ENCODE measurements at regions of chr12 and their contacts with region 1.

Region 1: GRCh38 chr12:96578526-96579125 is 89.2 kb downstream of the CFAP54 start:
- DNase-seq: no peak
- H3K4me3 Mint-ChIP-seq: no peak overlapping the region
- H3K27ac Mint-ChIP-seq: no peak overlapping the region
- H3K4me1 Mint-ChIP-seq: peaks cover 9% of the 10 kb centered on the region
- H3K27me3 Mint-ChIP-seq: peaks cover 5% of the 10 kb centered on the region

Region 2: GRCh38 chr12:96719660-96720363 is 141.2 kb after region 1 on chr12:
- CTCF ChIA-PET with region 1: interaction called, 4 read pairs
- intact Hi-C with region 1: loop called (anchors 2 kb)
- DNase-seq: peak; percentile 52
- H3K4me3 Mint-ChIP-seq: peak overlapping the region; percentile 77
- H3K27ac Mint-ChIP-seq: peak overlapping the region; percentile 85
- H3K4me1 Mint-ChIP-seq: peaks cover 11% of the 10 kb centered on the region
- H3K27me3 Mint-ChIP-seq: no peaks in the 10 kb centered on the region

Region 3: GRCh38 chr12:97308576-97309198 is 730.1 kb after region 1 on chr12:
- CTCF ChIA-PET with region 1: interaction called, 7 read pairs
- intact Hi-C with region 1: loop called (anchors 1 kb)
- DNase-seq: no peak
- H3K4me3 Mint-ChIP-seq: no peak overlapping the region
- H3K27ac Mint-ChIP-seq: no peak overlapping the region
- H3K4me1 Mint-ChIP-seq: no peaks in the 10 kb centered on the region
- H3K27me3 Mint-ChIP-seq: peaks cover 5% of the 10 kb centered on the region

Region 4: GRCh38 chr12:97404543-97404942 is 825.9 kb after region 1 on chr12:
- CTCF ChIA-PET with region 1: no interaction called
- intact Hi-C with region 1: loop called (anchors 1 kb)
- DNase-seq: peak; percentile 39
- H3K4me3 Mint-ChIP-seq: no peak overlapping the region
- H3K27ac Mint-ChIP-seq: no peak overlapping the region
- H3K4me1 Mint-ChIP-seq: no peaks in the 10 kb centered on the region
- H3K27me3 Mint-ChIP-seq: no peaks in the 10 kb centered on the region

Region 5: DNA sequence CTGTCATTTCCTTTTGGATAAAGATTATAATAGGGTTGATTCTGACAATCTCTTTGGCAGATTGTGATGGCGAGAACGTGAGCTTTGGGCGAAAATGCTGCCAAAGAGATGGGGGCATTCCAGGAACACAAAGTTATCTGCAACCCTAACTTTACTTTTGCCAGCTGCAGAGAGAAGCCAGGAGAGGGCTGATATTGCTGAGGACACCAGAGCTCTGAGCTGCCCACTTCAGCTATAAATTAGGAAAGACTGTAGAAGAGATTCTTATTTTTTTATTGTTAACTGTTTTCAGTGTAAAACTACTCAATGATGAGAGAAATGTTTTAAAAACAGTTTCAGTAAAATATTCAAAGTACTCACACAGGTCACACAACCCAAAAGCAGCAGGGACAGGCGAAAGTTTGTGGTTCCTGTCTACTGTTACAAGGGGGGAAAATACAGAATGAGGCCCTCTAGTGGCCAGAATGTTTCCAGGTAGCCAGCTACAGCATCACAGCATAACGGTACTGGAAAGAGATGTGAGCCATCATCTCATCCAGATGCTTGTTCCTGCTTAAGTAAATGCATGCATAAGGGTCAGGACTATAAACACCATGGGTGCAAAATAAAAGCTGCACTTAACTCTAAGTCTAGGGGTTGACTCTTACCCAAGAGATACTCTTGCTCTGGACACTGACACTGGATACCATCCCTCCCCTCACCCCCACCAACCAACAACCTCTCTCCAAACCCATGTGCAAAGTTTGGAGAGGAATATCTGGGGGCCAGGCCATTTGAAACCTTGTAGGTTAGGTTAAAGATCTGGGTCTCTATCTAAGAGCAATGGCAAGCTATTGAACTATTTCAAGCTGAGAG is 1382.4 kb after region 1 on chr12:
- CTCF ChIA-PET with region 1: interaction called, 3 read pairs
- intact Hi-C with region 1: loop called (anchors 5 kb)
- DNase-seq: peak; percentile 41
- H3K4me3 Mint-ChIP-seq: no peak overlapping the region
- H3K27ac Mint-ChIP-seq: no peak overlapping the region
- H3K4me1 Mint-ChIP-seq: no peaks in the 10 kb centered on the region
- H3K27me3 Mint-ChIP-seq: no peaks in the 10 kb centered on the region

Region 6: DNA sequence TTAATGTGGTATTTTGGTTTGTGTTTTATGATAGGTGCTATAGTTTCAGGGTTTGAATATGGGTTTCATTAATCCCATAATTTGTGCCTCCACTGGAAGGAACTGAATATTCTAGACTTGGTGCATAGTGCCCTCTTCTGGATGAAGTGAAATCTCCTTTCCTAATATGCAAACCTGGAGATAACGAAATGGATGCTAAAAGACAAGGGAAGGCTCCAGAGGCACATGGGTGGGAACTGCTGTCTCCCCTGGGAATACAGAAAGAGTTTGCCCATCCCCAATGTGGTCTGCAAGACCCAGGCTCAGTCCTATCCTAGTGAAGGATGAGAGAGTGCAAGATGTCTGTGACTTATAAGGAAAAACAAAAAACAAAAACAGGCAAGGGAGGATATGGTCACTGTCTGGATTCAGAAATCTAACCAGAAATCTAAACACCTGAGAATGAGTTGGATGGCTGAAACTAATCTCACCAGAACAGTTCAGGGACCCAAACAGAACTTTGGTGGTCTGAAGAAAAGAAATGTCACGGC is 1794.5 kb after region 1 on chr12:
- CTCF ChIA-PET with region 1: no interaction called
- intact Hi-C with region 1: loop called (anchors 2 kb)
- DNase-seq: no peak
- H3K4me3 Mint-ChIP-seq: no peak overlapping the region
- H3K27ac Mint-ChIP-seq: no peak overlapping the region
- H3K4me1 Mint-ChIP-seq: peaks cover 9% of the 10 kb centered on the region
- H3K27me3 Mint-ChIP-seq: peaks cover 30% of the 10 kb centered on the region

Region 7: GRCh38 chr12:98503592-98504367 is 1925.2 kb after region 1 on chr12:
- CTCF ChIA-PET with region 1: no interaction called
- intact Hi-C with region 1: loop called (anchors 10 kb)
- DNase-seq: peak; percentile 97
- H3K4me3 Mint-ChIP-seq: peak overlapping the region; percentile 97
- H3K27ac Mint-ChIP-seq: peak overlapping the region; percentile 100
- H3K4me1 Mint-ChIP-seq: peaks cover 16% of the 10 kb centered on the region
- H3K27me3 Mint-ChIP-seq: peaks cover 8% of the 10 kb centered on the region

Measured in activated naive CD4-positive, alpha-beta T cell treated with anti-CD3 and anti-CD28 coated beads for 36 hours (primary cell).